ENCODE measurements at regions of chr3 and their contacts with region 1.

Region 1: GRCh38 chr3:60935709-60936108 is 315.5 kb downstream of the FHIT start:
- DNase-seq: peak; percentile 91
- ATAC-seq: peak; percentile 96
- H3K4me3 ChIP-seq: no peak overlapping the region
- H3K27ac ChIP-seq: peak overlapping the region; percentile 73
- H3K4me1 ChIP-seq: peaks cover 42% of the 10 kb centered on the region
- H3K27me3 ChIP-seq: no peaks in the 10 kb centered on the region
- CTCF ChIP-seq: no peak

Region 2: GRCh38 chr3:60669636-60670035 is 266.1 kb before region 1 on chr3:
- CTCF ChIA-PET with region 1: no interaction called
- POLR2A ChIA-PET with region 1: no interaction called
- intact Hi-C with region 1: no loop called
- DNase-seq: no peak
- ATAC-seq: no peak
- H3K4me3 ChIP-seq: no peak overlapping the region
- H3K27ac ChIP-seq: no peak overlapping the region
- H3K4me1 ChIP-seq: no peaks in the 10 kb centered on the region
- H3K27me3 ChIP-seq: no peaks in the 10 kb centered on the region
- CTCF ChIP-seq: no peak

Region 3: DNA sequence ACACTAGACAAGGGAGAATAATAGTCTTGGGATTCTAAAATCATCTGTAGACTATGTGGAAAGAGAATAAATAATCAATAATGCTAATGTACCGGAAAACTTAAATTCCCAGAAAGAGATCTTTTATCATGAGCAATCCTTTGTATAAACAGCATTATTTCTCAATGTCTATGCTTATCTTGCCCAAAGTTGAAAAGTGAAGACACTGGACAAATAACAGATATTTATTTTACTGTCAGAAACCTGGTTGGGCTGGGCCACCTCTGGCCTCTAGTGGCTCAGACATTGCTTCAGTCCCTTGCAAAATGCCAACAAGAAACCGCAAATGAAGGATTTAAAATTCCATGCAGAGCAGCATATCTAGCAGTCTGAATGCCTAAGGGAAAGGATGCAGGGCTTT is 94.3 kb before region 1 on chr3:
- CTCF ChIA-PET with region 1: no interaction called
- POLR2A ChIA-PET with region 1: no interaction called
- intact Hi-C with region 1: loop called (anchors 1 kb)
- DNase-seq: peak; percentile 89
- ATAC-seq: peak; percentile 93
- H3K4me3 ChIP-seq: no peak overlapping the region
- H3K27ac ChIP-seq: no peak overlapping the region
- H3K4me1 ChIP-seq: peaks cover 14% of the 10 kb centered on the region
- H3K27me3 ChIP-seq: no peaks in the 10 kb centered on the region
- CTCF ChIP-seq: peak; percentile 16; the same call in 1 of the 2 replicates

Region 4: GRCh38 chr3:60854791-60855190 is 80.9 kb before region 1 on chr3:
- CTCF ChIA-PET with region 1: no interaction called
- POLR2A ChIA-PET with region 1: no interaction called
- intact Hi-C with region 1: no loop called
- DNase-seq: no peak
- ATAC-seq: no peak
- H3K4me3 ChIP-seq: no peak overlapping the region
- H3K27ac ChIP-seq: no peak overlapping the region
- H3K4me1 ChIP-seq: no peaks in the 10 kb centered on the region
- H3K27me3 ChIP-seq: no peaks in the 10 kb centered on the region
- CTCF ChIP-seq: no peak

Region 5: GRCh38 chr3:62607287-62608029 is 1671.7 kb after region 1 on chr3:
- CTCF ChIA-PET with region 1: no interaction called
- POLR2A ChIA-PET with region 1: no interaction called
- intact Hi-C with region 1: loop called (anchors 10 kb)
- DNase-seq: peak; percentile 63
- ATAC-seq: peak; percentile 31
- H3K4me3 ChIP-seq: no peak overlapping the region
- H3K27ac ChIP-seq: no peak overlapping the region
- H3K4me1 ChIP-seq: peaks cover 35% of the 10 kb centered on the region
- H3K27me3 ChIP-seq: no peaks in the 10 kb centered on the region
- CTCF ChIP-seq: no peak

Measured in PC-3 (cell line).